ENCODE measurements at regions of chr7 and their contacts with region 1.

Region 1: DNA sequence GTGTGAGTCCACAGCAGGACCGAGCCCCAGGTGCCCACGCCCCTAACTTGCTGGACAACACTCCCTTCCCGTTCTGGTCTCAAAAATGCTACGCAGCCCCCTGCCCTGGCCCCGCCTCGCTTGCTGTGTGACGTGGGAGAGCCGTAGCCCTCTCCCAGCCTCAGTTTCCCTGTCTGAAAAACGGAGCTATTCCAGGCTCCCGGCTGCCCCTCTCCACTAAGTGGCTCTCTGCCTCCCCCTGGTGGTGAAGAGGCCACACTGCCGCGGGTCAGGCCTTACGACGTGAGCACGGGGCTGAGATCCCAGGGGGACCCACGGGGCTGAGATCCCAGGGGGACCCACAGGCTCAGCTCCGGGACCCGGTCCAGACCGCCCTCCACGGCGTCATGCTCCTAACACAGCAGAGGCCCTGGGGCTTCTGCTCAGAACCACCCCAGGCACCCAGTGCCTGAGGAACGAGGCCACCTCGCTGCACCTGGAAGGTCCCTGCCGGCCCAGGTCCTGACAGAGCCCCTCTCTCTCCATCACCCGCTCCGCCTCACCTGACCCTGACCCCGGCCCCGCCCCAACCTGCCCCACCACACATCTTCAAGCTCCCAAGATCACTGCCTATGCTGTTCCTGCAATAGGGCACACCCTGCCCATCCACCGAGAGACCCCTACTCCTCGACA is 26.7 kb downstream of the MICALL2 start:
- DNase-seq: peak; percentile 94
- H3K4me3 ChIP-seq: no peak overlapping the region; a peak in 1 of 4 replicates
- H3K27ac ChIP-seq: no peak overlapping the region
- H3K4me1 ChIP-seq: no peaks in the 10 kb centered on the region
- H3K27me3 ChIP-seq: 0 out of 2 replicates have a peak, but pooled peaks cover 7% of the 10 kb centered on the region
- CTCF ChIP-seq: peak; percentile 99
- EP300 ChIP-seq: no peak
- RAD21 ChIP-seq: peak; percentile 81

Region 2: GRCh38 chr7:1103009-1103788 is 329.3 kb before region 1 on chr7:
- CTCF ChIA-PET with region 1: no interaction called
- POLR2A ChIA-PET with region 1: no interaction called
- DNase-seq: no peak
- H3K4me3 ChIP-seq: no peak overlapping the region
- H3K27ac ChIP-seq: no peak overlapping the region
- H3K4me1 ChIP-seq: peaks cover 6 to 22% of the 10 kb centered on the region in 2 experiments; a peak in 2 of 4 replicates
- H3K27me3 ChIP-seq: no peaks in the 10 kb centered on the region
- CTCF ChIP-seq: no peak
- EP300 ChIP-seq: no peak
- RAD21 ChIP-seq: no peak

Region 3: GRCh38 chr7:1193593-1194424 is 238.7 kb before region 1 on chr7:
- CTCF ChIA-PET with region 1: interaction called, 115 read pairs
- POLR2A ChIA-PET with region 1: no interaction called
- DNase-seq: peak; percentile 90
- H3K4me3 ChIP-seq: no peak overlapping the region
- H3K27ac ChIP-seq: no peak overlapping the region
- H3K4me1 ChIP-seq: peaks cover 0 to 3% of the 10 kb centered on the region in 2 experiments; a peak in 1 of 4 replicates
- H3K27me3 ChIP-seq: peaks cover 29% of the 10 kb centered on the region; the same call in 1 of the 2 replicates
- CTCF ChIP-seq: peak; percentile 75
- EP300 ChIP-seq: no peak
- RAD21 ChIP-seq: peak; percentile 90

Region 4: GRCh38 chr7:1225441-1226185 is 206.9 kb before region 1 on chr7:
- CTCF ChIA-PET with region 1: interaction called, 175 read pairs
- POLR2A ChIA-PET with region 1: no interaction called
- DNase-seq: peak; percentile 95
- H3K4me3 ChIP-seq: no peak overlapping the region; a peak in 1 of 4 replicates
- H3K27ac ChIP-seq: no peak overlapping the region
- H3K4me1 ChIP-seq: peaks cover 0 to 3% of the 10 kb centered on the region in 2 experiments; a peak in 1 of 4 replicates
- H3K27me3 ChIP-seq: peaks cover 94% of the 10 kb centered on the region
- CTCF ChIP-seq: peak; percentile 98
- EP300 ChIP-seq: no peak
- RAD21 ChIP-seq: peak; percentile 72

Region 5: GRCh38 chr7:1247527-1248059 is 185.0 kb before region 1 on chr7:
- CTCF ChIA-PET with region 1: interaction called, 16 read pairs
- POLR2A ChIA-PET with region 1: no interaction called
- DNase-seq: peak; percentile 76
- H3K4me3 ChIP-seq: no peak overlapping the region
- H3K27ac ChIP-seq: no peak overlapping the region
- H3K4me1 ChIP-seq: no peaks in the 10 kb centered on the region
- H3K27me3 ChIP-seq: peaks cover 95% of the 10 kb centered on the region
- CTCF ChIP-seq: no peak
- EP300 ChIP-seq: no peak
- RAD21 ChIP-seq: no peak

Region 6: GRCh38 chr7:1412322-1413261 is 20.0 kb before region 1 on chr7:
- CTCF ChIA-PET with region 1: interaction called, 34 read pairs
- POLR2A ChIA-PET with region 1: no interaction called
- DNase-seq: peak; percentile 100
- H3K4me3 ChIP-seq: no peak overlapping the region; a peak in 2 of 4 replicates
- H3K27ac ChIP-seq: no peak overlapping the region
- H3K4me1 ChIP-seq: peaks cover 0 to 5% of the 10 kb centered on the region in 2 experiments; a peak in 2 of 4 replicates
- H3K27me3 ChIP-seq: peaks cover 76% of the 10 kb centered on the region
- CTCF ChIP-seq: peak; percentile 92
- EP300 ChIP-seq: no peak
- RAD21 ChIP-seq: peak; percentile 80

Region 7: DNA sequence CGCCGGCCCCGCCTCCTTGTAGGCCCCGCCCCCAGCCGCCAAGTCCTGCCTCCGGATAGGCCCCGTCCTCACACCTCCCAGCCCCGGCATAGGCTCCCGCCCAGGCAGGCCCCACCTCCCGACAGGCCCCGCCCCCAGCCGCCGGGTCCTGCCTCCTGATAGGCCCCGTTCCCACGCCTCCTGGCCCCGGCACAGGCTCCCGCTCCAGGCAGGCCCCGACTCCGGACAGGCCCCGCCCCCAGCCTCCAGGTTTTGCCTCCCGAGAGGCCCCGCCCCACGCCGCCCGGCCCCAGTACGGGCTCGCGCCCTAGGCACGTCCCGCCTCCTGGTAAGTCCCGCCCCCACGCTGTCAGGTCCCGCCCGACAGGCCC is 27.0 kb after region 1 on chr7:
- CTCF ChIA-PET with region 1: interaction called, 36 read pairs
- POLR2A ChIA-PET with region 1: no interaction called
- DNase-seq: peak; percentile 100
- H3K4me3 ChIP-seq: peak overlapping the region; percentile 78 to 100
- H3K27ac ChIP-seq: peak overlapping the region in 1 of 2 experiments; percentile 96; a peak in 1 of 4 replicates
- H3K4me1 ChIP-seq: peaks cover 17 to 33% of the 10 kb centered on the region in 2 experiments; a peak in 3 of 4 replicates
- H3K27me3 ChIP-seq: no peaks in the 10 kb centered on the region
- CTCF ChIP-seq: no peak
- EP300 ChIP-seq: no peak
- RAD21 ChIP-seq: no peak

Measured in SK-N-SH (cell line).